ENCODE measurements at regions of chr2 and their contacts with region 1.

Region 1: DNA sequence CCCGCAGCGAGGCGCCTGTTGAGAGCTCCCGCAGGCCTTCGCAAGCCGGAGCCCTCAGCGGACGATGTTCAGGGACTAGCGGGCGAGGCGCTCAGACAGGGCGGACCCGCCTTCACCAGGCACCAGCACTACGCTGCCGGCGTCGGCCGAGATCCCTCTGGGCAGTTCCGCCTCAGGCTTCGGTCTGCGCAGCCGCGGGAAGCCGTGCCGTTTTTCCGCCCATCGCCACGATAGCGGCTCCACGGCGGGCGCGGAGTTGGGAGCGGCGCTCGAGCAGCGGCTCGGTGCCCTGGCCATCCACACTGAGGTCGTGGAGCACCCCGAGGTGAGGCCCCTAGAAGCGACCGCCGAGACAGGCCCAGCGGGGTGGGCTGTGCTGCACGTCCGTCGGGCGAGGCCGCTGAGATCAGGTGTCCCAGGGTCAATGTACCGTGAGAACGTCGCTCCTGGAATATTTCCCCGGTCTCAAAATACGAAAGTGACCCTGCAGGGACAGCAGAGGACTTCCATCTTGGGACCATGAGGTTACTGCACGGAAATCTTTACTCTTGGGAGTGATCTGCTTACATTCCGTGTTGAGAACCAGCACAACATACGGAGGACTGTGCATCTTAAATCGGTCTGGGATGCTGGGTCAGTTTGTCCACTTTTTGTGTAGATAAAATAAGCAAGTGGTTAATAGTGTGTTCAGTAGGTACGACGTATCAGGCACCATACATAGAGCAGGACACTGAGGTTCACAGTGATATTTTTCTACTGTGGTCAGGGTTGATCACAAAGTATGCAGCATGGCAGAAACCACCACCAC is 13.3 kb upstream of the MTIF2 start:
- DNase-seq: peak; percentile 91 to 93
- H3K4me3 ChIP-seq: peak overlapping the region; percentile 80
- H3K4me3 Mint-ChIP-seq: peak overlapping the region; percentile 86
- H3K27ac Mint-ChIP-seq: peak overlapping the region; percentile 90
- H3K4me1 ChIP-seq: peaks cover 9% of the 10 kb centered on the region
- H3K4me1 Mint-ChIP-seq: peaks cover 7% of the 10 kb centered on the region
- H3K27me3 ChIP-seq: no peaks in the 10 kb centered on the region
- H3K27me3 Mint-ChIP-seq: no peaks in the 10 kb centered on the region
- CTCF ChIP-seq: no peak

Region 2: DNA sequence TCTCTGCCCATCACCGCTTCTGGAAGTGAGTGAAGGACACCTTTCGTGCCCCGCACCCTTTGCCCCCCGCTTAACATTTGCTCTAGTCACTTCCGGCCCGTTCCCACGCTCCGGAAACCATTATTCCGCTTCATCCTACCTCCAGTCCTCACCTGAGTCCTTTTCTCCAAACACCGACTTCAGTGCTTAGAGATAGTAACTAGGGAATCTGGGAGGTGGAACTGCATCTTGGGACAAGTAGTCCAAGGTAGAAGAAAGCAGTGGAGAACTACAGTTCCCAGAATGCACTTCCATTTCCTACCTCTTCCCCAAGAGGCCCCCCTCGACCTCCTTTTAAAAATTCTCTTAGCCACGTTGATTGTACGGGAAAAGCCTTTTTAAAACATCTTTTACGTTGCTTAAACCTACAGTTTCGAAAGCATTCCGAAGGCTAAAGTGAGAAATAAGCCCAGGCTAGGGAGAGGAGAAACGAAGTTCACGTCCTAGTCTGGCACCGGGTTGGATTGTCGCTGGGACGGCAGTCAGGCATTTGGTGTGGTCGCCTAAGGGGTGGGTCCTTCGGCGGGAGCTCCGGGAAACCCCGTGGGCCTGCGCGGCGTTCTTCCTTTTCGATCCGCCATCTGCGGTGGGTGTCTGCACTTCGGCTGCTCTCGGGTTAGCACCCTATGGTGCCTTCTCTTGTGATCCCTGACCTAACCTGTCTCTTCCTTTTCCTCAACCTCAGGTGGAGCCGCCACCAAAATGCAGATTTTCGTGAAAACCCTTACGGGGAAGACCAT is 50.0 kb before region 1 on chr2 and contains the starts of genes CLHC1 and RPS27A:
- CTCF ChIA-PET with region 1: no interaction called
- POLR2A ChIA-PET with region 1: interaction called, 3 read pairs
- intact Hi-C with region 1: loop called (anchors 5 kb)
- DNase-seq: peak; percentile 93 to 97
- H3K4me3 ChIP-seq: peak within 1 kb of the TSS; percentile 96
- H3K4me3 Mint-ChIP-seq: peak within 1 kb of the TSS; percentile 85
- H3K27ac Mint-ChIP-seq: peak within 1 kb of the TSS; percentile 94
- H3K4me1 ChIP-seq: peaks cover 38% of the 10 kb centered on the region
- H3K4me1 Mint-ChIP-seq: peaks cover 36% of the 10 kb centered on the region
- H3K27me3 ChIP-seq: no peaks in the 10 kb centered on the region
- H3K27me3 Mint-ChIP-seq: no peaks in the 10 kb centered on the region
- CTCF ChIP-seq: no peak
- total RNA-seq, gene CLHC1: 12.6 and 13.4 TPM in 2 replicates
- total RNA-seq, gene RPS27A: 1,305 and 1,418 TPM in 2 replicates

Region 3: GRCh38 chr2:55327470-55328230 is 45.3 kb after region 1 on chr2:
- CTCF ChIA-PET with region 1: no interaction called
- POLR2A ChIA-PET with region 1: no interaction called
- intact Hi-C with region 1: no loop called
- DNase-seq: no peak
- H3K4me3 ChIP-seq: no peak overlapping the region
- H3K4me3 Mint-ChIP-seq: no peak overlapping the region
- H3K27ac Mint-ChIP-seq: no peak overlapping the region
- H3K4me1 ChIP-seq: peaks cover 9% of the 10 kb centered on the region
- H3K4me1 Mint-ChIP-seq: no peaks in the 10 kb centered on the region
- H3K27me3 ChIP-seq: no peaks in the 10 kb centered on the region
- H3K27me3 Mint-ChIP-seq: no peaks in the 10 kb centered on the region
- CTCF ChIP-seq: no peak

Region 4: GRCh38 chr2:55419679-55420438 is 137.5 kb after region 1 on chr2 and contains the start of gene CCDC88A:
- CTCF ChIA-PET with region 1: no interaction called
- POLR2A ChIA-PET with region 1: no interaction called
- intact Hi-C with region 1: loop called (anchors 5 kb)
- DNase-seq: peak; percentile 96 to 97
- H3K4me3 ChIP-seq: peak within 1 kb of the TSS; percentile 74
- H3K4me3 Mint-ChIP-seq: peak within 1 kb of the TSS; percentile 93
- H3K27ac Mint-ChIP-seq: no peak within 1 kb of the TSS
- H3K4me1 ChIP-seq: no peaks in the 10 kb centered on the region; the same call in 1 of the 2 replicates
- H3K4me1 Mint-ChIP-seq: peaks cover 13% of the 10 kb centered on the region
- H3K27me3 ChIP-seq: no peaks in the 10 kb centered on the region
- H3K27me3 Mint-ChIP-seq: peaks cover 11% of the 10 kb centered on the region
- CTCF ChIP-seq: peak; percentile 6 to 31
- total RNA-seq, gene CCDC88A: 6.4 and 7.7 TPM in 2 replicates

Region 5: DNA sequence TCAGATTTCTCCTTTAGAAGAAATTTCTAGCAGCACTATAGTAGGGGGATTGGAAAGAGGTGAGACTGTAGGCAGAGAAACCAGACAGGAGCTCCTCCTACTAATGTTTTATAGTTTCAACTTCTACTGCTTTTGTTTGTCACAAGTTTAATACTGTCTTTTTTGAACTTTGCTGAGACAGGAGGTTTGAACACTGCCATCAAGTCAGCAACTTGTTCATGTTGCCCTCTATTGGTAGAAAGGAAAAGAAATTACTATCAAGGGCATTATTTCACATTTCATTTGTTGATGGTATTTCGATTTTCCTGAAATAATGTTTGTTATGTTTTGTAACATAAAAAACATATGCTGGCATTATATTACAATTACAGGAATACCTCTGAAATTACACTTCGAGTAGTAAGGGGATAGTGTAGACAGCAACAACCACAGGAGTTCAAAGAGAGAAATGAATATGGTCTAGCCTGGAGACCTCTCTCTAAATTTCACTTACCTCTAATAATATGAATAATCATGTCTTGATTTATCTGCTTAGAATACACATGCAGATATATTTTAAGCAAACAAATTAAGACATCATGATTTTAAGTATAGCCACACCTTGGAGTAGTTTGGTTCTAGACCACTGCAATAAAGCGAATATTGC is 149.8 kb after region 1 on chr2:
- CTCF ChIA-PET with region 1: no interaction called
- POLR2A ChIA-PET with region 1: interaction called, 3 read pairs
- intact Hi-C with region 1: loop called (anchors 5 kb)
- DNase-seq: no peak
- H3K4me3 ChIP-seq: no peak overlapping the region
- H3K4me3 Mint-ChIP-seq: no peak overlapping the region
- H3K27ac Mint-ChIP-seq: no peak overlapping the region
- H3K4me1 ChIP-seq: no peaks in the 10 kb centered on the region
- H3K4me1 Mint-ChIP-seq: no peaks in the 10 kb centered on the region
- H3K27me3 ChIP-seq: no peaks in the 10 kb centered on the region
- H3K27me3 Mint-ChIP-seq: peaks cover 7% of the 10 kb centered on the region
- CTCF ChIP-seq: peak; percentile 43 to 53

Measured in Caco-2 (cell line).